ENCODE measurements at regions of chr1 and their contacts with region 1.

Region 1: GRCh38 chr1:185170291-185170848 is 13.4 kb downstream of the SWT1 start:
- DNase-seq: peak; percentile 41 to 51 (median 44)
- H3K4me3 ChIP-seq: no peak overlapping the region
- H3K4me3 Mint-ChIP-seq: peak overlapping the region in 1 of 8 donors; percentile 57
- H3K27ac ChIP-seq: no peak overlapping the region
- H3K27ac Mint-ChIP-seq: peak overlapping the region in 4 of 7 donors; percentile 37 to 55 (median 40)
- H3K4me1 ChIP-seq: no peaks in the 10 kb centered on the region
- H3K4me1 Mint-ChIP-seq: peaks cover 0 to 4% (median 2%) of the 10 kb centered on the region in 4 donors
- H3K27me3 ChIP-seq: no peaks in the 10 kb centered on the region
- H3K27me3 Mint-ChIP-seq: no peaks in the 10 kb centered on the region

Region 2: DNA sequence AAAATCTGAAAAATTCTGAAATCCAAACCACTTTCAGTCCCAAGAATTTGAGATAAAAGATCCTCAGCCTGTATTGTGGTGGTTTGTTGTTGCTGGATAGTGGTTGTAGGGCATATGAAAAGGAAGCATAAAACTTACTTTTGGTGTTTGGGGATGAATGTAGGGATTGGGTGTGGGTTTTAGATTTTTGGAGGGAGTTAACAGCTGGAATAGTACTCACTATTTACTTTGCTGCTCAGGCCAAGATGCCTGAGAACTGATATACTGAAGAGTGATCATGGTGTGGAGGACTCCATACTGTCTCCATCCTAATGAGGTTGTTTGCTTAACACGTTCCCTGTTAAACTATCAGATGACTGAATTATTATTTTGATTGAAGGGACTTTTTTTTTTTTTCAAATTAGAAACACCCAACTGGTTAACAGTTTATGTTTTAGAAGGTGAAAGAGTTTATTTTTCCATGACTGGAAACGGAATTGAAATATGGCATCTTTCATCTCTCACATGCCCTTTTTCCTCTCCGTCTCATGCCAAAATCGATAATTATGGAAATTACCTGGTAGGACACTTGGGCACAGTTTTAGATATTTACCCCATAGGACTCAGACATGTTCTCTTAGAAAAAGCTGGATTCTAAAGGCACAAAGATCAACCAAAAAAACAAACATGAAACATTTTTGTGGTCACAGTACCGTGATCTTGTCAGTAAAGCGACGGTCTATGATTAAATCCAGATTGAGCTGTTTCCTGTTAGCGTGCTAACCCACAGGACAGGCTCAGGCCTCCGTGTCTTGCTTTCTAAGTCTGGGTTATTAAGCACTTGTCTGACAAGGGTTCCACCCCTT is 1328.2 kb before region 1 on chr1:
- CTCF ChIA-PET with region 1: no interaction called
- POLR2A ChIA-PET with region 1: no interaction called
- intact Hi-C with region 1: no loop called
- DNase-seq: peak in 4 of 5 donors; percentile 3 to 25 (median 9)
- H3K4me3 ChIP-seq: no peak overlapping the region
- H3K4me3 Mint-ChIP-seq: peak overlapping the region in 7 of 8 donors; percentile 45 to 78 (median 63)
- H3K27ac ChIP-seq: no peak overlapping the region
- H3K27ac Mint-ChIP-seq: peak overlapping the region in 4 of 7 donors; percentile 2 to 74 (median 42)
- H3K4me1 ChIP-seq: peaks cover 6% of the 10 kb centered on the region
- H3K4me1 Mint-ChIP-seq: peaks cover 11 to 18% (median 15%) of the 10 kb centered on the region in 4 donors
- H3K27me3 ChIP-seq: no peaks in the 10 kb centered on the region
- H3K27me3 Mint-ChIP-seq: no peaks in the 10 kb centered on the region

Region 3: DNA sequence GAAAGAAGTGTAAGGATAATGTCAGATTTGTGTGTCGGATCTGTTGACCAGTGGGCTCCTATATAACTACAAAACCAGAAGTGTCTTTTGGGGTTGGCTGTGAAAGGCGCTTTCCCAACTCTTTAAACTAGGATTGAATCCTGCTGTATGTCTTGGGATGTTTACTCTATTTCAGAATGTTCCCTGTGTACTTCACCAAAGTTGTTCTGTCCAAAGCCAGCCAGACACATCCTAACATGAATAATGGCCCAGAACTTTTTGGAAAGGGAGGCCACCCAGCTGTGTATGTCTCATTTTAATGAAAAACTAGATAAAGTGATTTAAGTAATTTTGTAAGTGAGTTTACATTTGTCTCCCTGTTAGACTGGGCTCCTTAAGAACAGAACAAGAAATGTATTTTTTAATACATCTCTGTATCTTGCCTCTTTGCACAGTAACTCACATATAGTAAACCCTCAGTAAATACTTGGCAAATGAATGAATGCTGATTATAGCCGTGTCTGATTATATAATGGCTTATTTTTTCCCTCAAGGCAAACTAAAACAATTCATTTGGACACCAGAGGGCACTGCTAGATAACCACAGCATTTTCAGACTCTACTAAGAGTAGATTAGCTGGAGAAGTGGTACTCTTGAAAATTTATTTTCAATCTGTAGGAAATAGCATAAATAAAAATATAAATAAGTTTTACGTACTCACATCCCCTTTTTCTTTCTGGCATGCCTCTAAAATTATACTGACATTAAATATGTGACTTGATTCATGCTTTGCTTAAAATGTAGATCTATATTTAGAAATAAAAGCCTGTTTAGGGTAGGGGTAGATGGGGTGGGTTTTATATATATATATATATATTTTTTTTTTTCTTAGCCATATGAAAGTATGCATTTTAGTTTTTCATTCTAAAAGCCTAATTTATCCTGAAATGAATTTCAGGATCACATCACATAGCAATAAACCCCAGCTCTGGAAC is 1095.0 kb before region 1 on chr1:
- CTCF ChIA-PET with region 1: no interaction called
- POLR2A ChIA-PET with region 1: no interaction called
- intact Hi-C with region 1: loop called (anchors 5 kb)
- DNase-seq: peak in 4 of 5 donors; percentile 10 to 29 (median 26)
- H3K4me3 ChIP-seq: no peak overlapping the region
- H3K4me3 Mint-ChIP-seq: no peak overlapping the region
- H3K27ac ChIP-seq: no peak overlapping the region
- H3K27ac Mint-ChIP-seq: peak overlapping the region in 2 of 7 donors; percentile 30 to 46
- H3K4me1 ChIP-seq: no peaks in the 10 kb centered on the region
- H3K4me1 Mint-ChIP-seq: no peaks in the 10 kb centered on the region
- H3K27me3 ChIP-seq: no peaks in the 10 kb centered on the region
- H3K27me3 Mint-ChIP-seq: no peaks in the 10 kb centered on the region

Region 4: GRCh38 chr1:185044981-185045813 is 125.2 kb before region 1 on chr1 and contains the start of gene RNF2:
- CTCF ChIA-PET with region 1: interaction called, 11 read pairs
- POLR2A ChIA-PET with region 1: no interaction called
- intact Hi-C with region 1: no loop called
- DNase-seq: peak; percentile 76 to 88 (median 83)
- H3K4me3 ChIP-seq: peak within 1 kb of the TSS; percentile 72 to 78
- H3K4me3 Mint-ChIP-seq: peak within 1 kb of the TSS; percentile 94 to 99 (median 96)
- H3K27ac ChIP-seq: peak within 1 kb of the TSS; percentile 71
- H3K27ac Mint-ChIP-seq: peak within 1 kb of the TSS; percentile 88 to 98 (median 96)
- H3K4me1 ChIP-seq: peaks cover 31% of the 10 kb centered on the region
- H3K4me1 Mint-ChIP-seq: peaks cover 31 to 53% (median 43%) of the 10 kb centered on the region in 4 donors
- H3K27me3 ChIP-seq: no peaks in the 10 kb centered on the region
- H3K27me3 Mint-ChIP-seq: no peaks in the 10 kb centered on the region
- total RNA-seq, gene RNF2: 27.0 TPM

Region 5: DNA sequence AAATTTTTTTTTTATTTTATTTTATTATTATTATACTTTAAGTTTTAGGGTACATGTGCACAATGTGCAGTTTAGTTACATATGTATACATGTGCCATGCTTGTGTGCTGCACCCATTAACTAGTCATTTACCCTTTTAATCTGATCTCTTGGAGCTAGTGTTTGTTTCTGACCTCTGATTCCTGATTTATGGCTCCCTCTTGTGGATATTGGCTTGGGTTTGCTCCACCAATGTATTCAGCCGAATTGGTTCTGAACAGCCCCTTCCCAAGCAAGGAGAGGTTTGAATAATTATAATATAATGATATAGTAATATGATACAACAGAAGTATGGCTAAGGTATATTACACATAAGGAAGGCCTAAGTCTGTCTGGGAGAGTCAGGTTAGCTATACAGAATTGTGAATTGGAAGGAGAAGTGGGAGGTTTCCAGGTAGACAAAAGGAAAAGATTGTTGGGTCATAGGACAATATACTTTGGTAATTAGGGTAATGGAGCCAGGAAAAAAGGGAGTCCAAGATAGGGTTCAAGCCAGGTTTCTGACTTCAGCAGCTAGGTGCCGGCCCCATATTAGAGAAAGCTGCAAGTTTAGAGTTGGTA is 510.8 kb after region 1 on chr1:
- CTCF ChIA-PET with region 1: interaction called, 24 read pairs
- POLR2A ChIA-PET with region 1: no interaction called
- intact Hi-C with region 1: no loop called
- DNase-seq: peak in 4 of 5 donors; percentile 36 to 43 (median 38)
- H3K4me3 ChIP-seq: no peak overlapping the region
- H3K4me3 Mint-ChIP-seq: peak overlapping the region in 1 of 8 donors; percentile 34
- H3K27ac ChIP-seq: no peak overlapping the region
- H3K27ac Mint-ChIP-seq: no peak overlapping the region
- H3K4me1 ChIP-seq: peaks cover 26% of the 10 kb centered on the region
- H3K4me1 Mint-ChIP-seq: peaks cover 19 to 32% (median 26%) of the 10 kb centered on the region in 4 donors
- H3K27me3 ChIP-seq: no peaks in the 10 kb centered on the region
- H3K27me3 Mint-ChIP-seq: no peaks in the 10 kb centered on the region

Measured in CD4-positive, alpha-beta memory T cell (primary cell).